ENCODE measurements at regions of chr12 and their contacts with region 1.

Region 1: DNA sequence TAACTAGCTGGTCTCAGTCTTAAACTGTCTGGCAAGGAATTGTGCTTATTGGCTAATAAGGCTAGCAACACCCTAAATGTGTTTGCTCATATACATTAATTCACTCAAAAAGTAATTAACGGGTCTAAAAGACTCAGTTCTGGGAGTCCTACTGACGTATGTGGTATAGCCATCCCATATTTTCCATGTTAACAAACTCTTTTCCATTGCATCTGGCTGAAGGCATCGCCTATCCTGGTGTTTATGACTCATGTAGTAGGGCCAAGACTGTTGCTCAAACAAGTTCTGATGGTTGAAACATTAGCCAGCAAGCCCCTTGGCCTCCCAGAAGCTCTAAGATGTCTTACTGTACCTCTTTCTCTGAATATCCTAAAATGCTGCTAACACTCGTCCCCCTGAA is 98.5 kb downstream of the PHLDA1 start:
- DNase-seq: no peak
- ATAC-seq: no peak
- H3K4me3 Mint-ChIP-seq: no peak overlapping the region
- H3K27ac Mint-ChIP-seq: no peak overlapping the region
- H3K4me1 Mint-ChIP-seq: peaks cover 20% of the 10 kb centered on the region
- H3K27me3 Mint-ChIP-seq: peaks cover 7% of the 10 kb centered on the region

Region 2: DNA sequence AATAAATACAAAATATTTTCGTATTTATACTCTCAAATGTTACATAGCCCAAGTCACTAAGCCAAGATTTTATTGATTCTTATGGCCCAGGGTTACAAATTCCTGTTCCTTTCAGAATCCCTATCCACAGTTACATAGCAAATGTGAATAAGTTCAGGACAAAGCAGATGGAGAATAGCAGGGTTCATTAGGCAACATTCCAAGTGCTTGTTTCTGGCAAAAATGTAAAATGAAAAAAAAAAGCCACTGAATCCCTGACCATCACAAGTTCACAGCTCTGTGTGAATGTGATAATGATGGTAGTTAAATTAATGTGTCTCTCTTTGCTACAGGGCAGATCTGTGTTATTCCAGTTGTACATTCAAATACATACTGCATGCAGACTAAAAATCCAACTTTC is 798.1 kb before region 1 on chr12:
- POLR2A ChIA-PET with region 1: no interaction called
- DNase-seq: no peak
- ATAC-seq: no peak
- H3K4me3 Mint-ChIP-seq: no peak overlapping the region
- H3K27ac Mint-ChIP-seq: no peak overlapping the region
- H3K4me1 Mint-ChIP-seq: no peaks in the 10 kb centered on the region
- H3K27me3 Mint-ChIP-seq: peaks cover 4% of the 10 kb centered on the region

Region 3: GRCh38 chr12:75862692-75863471 is 70.2 kb before region 1 on chr12:
- POLR2A ChIA-PET with region 1: no interaction called
- DNase-seq: no peak
- ATAC-seq: no peak
- H3K4me3 Mint-ChIP-seq: no peak overlapping the region
- H3K27ac Mint-ChIP-seq: no peak overlapping the region
- H3K4me1 Mint-ChIP-seq: peaks cover 5% of the 10 kb centered on the region
- H3K27me3 Mint-ChIP-seq: peaks cover 3% of the 10 kb centered on the region

Region 4: GRCh38 chr12:75874441-75874840 is 58.7 kb before region 1 on chr12:
- POLR2A ChIA-PET with region 1: no interaction called
- DNase-seq: no peak
- ATAC-seq: no peak
- H3K4me3 Mint-ChIP-seq: no peak overlapping the region
- H3K27ac Mint-ChIP-seq: no peak overlapping the region
- H3K4me1 Mint-ChIP-seq: peaks cover 6% of the 10 kb centered on the region
- H3K27me3 Mint-ChIP-seq: peaks cover 20% of the 10 kb centered on the region

Region 5: DNA sequence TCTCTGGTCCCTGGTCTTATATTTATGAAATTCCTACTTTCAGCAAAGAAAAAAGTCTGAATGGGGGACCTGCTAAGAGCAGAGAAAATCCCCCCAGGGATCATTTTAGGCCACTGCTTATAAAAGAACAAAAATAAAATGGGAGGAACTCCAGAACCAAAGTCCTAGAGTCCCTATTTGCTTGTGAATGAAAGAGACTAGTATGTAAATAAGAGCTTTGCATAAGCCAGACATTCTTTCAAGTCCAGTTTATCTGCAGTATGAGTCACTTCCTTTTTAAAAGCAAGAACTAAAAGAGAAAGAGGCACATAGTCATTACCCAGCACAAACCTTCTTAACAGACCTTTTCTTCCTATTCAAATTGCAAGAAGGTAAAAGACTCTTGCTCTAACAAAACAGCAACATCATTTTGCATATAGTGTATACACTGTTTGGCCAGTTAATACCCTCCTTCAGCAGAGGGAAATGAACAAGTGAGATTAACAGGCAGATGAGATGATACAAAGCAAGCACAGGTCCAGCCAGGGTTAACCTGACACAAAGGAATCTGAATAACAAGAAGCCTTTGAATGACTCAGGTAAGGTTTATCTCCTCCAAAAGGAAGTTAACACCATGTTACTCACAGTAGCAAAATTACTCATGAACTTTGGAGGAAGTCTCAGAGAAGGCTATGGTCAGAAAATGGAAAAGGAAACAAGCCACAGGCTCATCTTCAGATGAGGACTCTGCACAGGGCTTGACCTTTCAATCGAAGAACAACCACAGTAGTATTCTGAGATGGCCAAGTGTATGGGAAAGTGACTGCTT is 11.2 kb after region 1 on chr12:
- POLR2A ChIA-PET with region 1: interaction called, 10 read pairs
- DNase-seq: no peak
- ATAC-seq: peak; percentile 91
- H3K4me3 Mint-ChIP-seq: peak overlapping the region; percentile 66
- H3K27ac Mint-ChIP-seq: peak overlapping the region; percentile 94
- H3K4me1 Mint-ChIP-seq: peaks cover 20% of the 10 kb centered on the region
- H3K27me3 Mint-ChIP-seq: no peaks in the 10 kb centered on the region

Region 6: DNA sequence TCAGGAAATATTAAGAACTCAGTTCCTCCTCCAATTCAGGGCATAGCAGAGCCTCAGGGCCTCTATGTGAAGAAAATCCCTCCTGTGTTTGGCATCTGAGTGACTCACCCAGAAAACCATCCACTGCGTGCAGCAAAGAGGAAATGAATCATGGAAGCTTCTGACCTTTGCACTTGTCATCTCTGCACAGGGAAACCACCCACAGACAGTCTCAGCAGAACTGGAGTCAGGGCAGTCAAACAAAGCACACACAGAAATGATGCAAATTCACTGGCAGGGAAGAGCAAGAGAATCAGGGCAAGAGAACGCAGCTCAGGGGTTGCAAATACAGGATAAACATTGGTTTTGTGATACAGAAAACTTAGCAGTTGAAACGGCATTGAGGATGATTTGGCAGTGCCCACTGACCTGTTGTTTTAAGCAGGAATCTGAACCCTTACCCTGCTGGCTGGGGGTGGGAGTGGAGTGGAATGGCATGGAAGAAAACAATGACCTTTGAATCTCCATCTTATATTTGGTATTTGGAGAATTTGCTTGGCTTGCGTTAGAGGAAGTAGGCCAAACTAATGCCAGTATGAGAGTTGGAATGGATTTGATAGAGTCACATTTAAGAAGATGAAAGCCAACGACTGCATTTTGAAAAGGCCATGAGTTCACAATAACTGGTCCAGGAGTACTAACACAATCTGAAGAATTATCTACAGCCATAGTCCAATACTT is 45.0 kb after region 1 on chr12:
- POLR2A ChIA-PET with region 1: interaction called, 19 read pairs
- DNase-seq: peak; percentile 50
- ATAC-seq: peak; percentile 90
- H3K4me3 Mint-ChIP-seq: peak overlapping the region; percentile 74
- H3K27ac Mint-ChIP-seq: peak overlapping the region; percentile 93
- H3K4me1 Mint-ChIP-seq: peaks cover 43% of the 10 kb centered on the region
- H3K27me3 Mint-ChIP-seq: no peaks in the 10 kb centered on the region

Region 7: DNA sequence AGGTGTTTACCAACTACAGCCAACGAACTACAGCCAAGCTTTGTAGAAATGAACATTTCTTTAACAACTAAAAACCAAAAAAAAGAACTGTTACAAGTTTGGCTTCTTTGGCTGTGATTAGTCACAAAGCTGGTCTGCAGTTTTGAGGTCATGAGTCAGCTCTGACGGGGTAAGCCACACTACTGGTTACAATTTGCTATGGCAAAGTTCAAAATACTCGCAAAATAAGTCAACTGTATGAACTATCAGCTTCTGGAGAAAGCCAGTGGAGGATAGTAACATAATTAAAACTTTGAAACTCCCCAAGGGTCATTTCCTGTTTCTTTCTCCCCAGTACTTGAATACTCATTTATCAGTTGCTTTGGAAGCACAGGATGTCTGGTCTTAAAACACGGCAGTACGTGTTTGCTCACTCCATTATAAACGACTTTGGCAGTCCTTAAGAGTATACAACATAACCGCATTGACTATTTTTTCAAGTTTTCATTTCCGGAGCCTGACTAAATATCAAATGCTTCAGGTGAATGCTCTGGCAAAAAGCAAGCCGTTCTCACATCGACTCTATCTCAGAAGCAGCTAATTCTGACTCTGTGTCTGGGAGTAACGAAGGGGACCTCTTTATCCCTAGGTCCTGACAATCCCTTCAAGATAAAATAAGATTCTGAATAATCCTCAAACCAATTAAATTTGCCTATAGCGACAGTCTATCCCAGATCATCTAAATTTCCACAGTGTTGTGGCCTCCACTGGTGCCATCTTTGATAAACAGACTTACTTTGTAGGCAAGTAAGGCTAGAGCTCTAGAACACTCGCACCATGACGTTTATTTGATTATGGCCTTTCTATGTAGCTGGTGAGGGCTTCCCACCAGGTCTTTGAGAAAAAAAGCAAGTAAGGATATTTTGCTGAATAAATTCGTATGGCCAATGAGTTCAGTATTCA is 87.9 kb after region 1 on chr12:
- POLR2A ChIA-PET with region 1: interaction called, 11 read pairs
- DNase-seq: peak; percentile 39
- ATAC-seq: peak; percentile 77
- H3K4me3 Mint-ChIP-seq: peak overlapping the region; percentile 61
- H3K27ac Mint-ChIP-seq: peak overlapping the region; percentile 93
- H3K4me1 Mint-ChIP-seq: peaks cover 36% of the 10 kb centered on the region
- H3K27me3 Mint-ChIP-seq: no peaks in the 10 kb centered on the region

Region 8: DNA sequence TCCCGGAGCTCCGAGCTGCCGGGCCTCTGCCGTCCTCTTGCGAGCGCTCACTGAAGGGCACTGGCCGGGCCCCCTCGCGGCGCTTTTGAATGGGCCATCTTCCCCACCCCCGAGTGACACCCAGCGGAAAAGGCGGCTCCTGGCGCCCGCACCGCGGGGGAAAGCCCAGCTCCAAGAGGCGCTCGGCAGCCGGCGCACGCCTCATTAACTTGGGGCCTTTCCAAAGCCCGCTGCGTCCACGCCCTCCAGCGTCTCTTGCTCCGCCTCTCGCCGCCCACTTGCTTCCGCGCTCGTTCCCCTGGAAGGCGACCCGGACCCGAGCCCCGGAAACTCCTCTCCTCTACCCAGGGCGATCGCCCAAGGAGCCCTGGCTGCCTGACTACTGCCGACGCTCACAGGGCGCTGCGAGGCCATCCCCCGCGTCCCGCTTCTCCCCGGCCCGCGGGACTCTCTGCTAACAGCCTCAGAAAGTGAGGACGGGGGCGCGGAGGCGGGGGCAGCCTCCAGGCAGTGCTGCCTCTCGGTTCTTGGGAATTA is 98.5 kb after region 1 on chr12 and contains the start of gene PHLDA1:
- POLR2A ChIA-PET with region 1: interaction called, 24 read pairs
- DNase-seq: peak; percentile 91
- ATAC-seq: peak; percentile 84
- H3K4me3 Mint-ChIP-seq: peak within 1 kb of the TSS; percentile 92
- H3K27ac Mint-ChIP-seq: peak within 1 kb of the TSS; percentile 93
- H3K4me1 Mint-ChIP-seq: peaks cover 29% of the 10 kb centered on the region
- H3K27me3 Mint-ChIP-seq: peaks cover 9% of the 10 kb centered on the region
- total RNA-seq, gene PHLDA1: 5.2 to 5.8 TPM

Region 9: DNA sequence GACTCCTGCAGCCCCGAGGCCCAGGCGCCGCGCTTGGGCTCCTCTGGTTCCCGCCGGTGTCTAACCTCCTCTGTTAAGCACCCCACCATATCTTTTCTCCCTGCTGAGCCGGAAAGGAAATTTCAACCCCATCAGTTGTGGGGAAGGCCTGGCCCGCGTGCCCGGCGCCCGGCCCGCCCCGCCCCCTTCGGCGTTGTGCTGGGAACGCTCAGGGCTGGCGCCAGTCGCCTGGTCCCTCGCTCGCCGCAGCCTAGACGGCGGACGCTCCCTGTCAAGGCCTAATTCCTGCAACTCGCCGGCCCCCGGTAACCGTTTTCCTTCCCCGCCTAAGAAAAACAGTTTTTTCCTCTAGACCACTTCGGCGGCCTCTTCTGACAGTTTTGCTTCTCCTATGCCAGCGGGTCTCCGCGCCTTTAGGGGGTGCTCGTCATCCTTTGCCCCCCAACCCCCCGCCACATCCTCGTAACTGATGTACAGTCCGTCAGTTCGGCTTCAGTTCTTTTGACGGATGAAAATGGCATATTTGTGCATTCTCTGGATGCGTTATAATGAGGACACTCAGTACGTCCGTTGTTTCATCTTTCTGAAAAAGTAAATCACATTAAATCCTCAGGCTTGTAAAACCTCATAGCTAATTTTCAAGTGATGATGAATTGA is 151.9 kb after region 1 on chr12:
- POLR2A ChIA-PET with region 1: no interaction called
- DNase-seq: no peak
- ATAC-seq: peak; percentile 57
- H3K4me3 Mint-ChIP-seq: peak overlapping the region; percentile 99
- H3K27ac Mint-ChIP-seq: peak overlapping the region; percentile 99
- H3K4me1 Mint-ChIP-seq: peaks cover 30% of the 10 kb centered on the region
- H3K27me3 Mint-ChIP-seq: no peaks in the 10 kb centered on the region

Measured in activated naive CD8-positive, alpha-beta T cell treated with anti-CD3 and anti-CD28 coated beads, Interleukin-2, amount 10 ng/mL, durations not matched to agents 7 days and 5 days (primary cell).